ENCODE measurements at regions of chr10 and their contacts with region 1.

Region 1: DNA sequence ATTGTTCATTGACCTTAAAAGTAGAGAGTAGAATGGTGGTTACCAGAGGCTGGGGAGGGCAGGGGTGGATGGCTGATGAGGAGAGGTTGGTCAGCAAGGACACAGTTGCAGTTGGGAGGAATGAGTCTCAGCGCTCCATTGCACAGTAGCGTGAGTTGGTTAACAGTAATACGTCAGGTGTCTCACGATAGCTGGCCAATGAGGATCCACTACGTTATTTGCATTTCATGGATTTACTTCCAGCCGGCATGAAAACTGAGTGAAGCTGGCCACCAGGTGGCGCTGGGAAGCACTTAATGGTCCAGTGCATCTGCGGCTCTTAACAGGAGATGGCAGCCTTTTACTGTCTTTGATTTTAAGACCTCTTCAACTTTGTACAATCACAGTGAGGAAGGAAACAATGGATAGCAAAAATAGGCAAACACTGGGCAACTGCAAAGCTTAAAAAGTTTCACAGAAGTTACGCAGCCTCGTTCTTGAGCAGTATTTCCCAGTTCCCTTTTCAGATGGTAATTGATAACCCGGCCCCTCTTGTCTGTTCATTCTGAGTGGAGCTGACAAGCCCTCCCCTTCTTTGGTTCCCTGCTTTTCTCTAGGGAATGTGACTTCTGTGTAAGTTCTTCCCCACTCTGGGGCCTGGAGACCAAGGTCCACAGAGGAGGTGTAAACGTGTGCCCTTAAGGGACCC is 23.7 kb downstream of the AKR1E2 start:
- ATAC-seq: peak; percentile 76 to 95 (median 90)
- H3K4me3 ChIP-seq: no peak overlapping the region
- H3K27ac ChIP-seq: no peak overlapping the region
- H3K4me1 ChIP-seq: peaks cover 3 to 4% of the 10 kb centered on the region in 2 donors

Region 2: GRCh38 chr10:5018134-5018533 is 168.4 kb after region 1 on chr10:
- in situ Hi-C with region 1: no loop called
- ATAC-seq: peak in 5 of 8 experiments; percentile 10 to 76 (median 70)
- H3K4me3 ChIP-seq: no peak overlapping the region
- H3K27ac ChIP-seq: no peak overlapping the region
- H3K4me1 ChIP-seq: peaks cover 4 to 19% of the 10 kb centered on the region in 2 donors

Region 3: DNA sequence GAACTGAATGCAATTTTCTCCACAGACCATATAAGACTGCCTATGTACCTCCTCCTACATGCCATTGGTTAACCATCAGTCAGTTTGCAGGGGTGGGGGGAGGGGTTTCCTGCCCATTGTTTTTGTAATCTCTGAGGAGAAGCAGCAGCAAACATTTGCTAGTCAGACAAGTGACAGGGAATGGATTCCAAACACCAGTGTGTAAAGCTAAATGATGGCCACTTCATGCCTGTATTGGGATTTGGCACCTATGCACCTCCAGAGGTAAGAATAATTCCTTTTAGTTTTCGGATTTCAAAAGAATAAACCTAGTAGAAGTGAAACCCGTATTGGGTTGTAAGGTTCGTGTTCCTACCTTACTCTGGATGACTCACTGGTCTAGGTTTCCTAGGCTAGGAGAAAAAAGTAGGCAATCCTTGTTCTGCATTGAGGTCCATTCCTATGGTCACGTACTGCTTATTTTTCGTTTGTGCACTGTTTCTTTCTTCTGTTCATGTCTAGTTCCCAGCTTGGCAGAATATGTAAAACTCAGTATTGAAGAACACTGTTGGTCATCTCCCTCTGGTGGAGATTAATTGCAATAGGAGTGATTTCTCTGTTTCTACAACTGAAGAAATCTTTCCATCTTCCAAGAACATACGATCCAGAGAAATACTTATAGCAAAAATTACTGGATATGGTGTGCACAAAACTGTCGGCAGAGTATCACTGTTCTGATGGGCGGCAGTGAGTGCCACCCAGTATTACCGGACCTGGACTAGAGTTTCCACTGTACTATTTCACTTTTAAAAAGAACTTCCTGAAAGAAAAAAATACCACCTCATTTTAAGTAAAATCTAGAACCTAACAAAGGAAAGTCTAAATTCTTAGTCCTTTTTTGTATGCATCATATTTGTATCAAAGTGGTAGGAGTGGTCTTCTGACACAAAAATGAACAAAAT is 244.8 kb after region 1 on chr10 and contains the start of gene AKR1C3:
- in situ Hi-C with region 1: loop called in 1 of 9 experiments (anchors 10 kb)
- ATAC-seq: peak in 5 of 8 experiments; percentile 24 to 91 (median 88)
- H3K4me3 ChIP-seq: no peak within 1 kb of the TSS
- H3K27ac ChIP-seq: no peak within 1 kb of the TSS
- H3K4me1 ChIP-seq: no peaks in the 10 kb centered on the region
- total RNA-seq, gene AKR1C3: 0.54 to 76.4 (median 1.6) TPM in 7 of 8 experiments, not detected in the other

Region 4: GRCh38 chr10:5317547-5318107 is 467.9 kb after region 1 on chr10:
- in situ Hi-C with region 1: loop called in 1 of 9 experiments (anchors 25 kb)
- ATAC-seq: peak; percentile 52 to 100 (median 76)
- H3K4me3 ChIP-seq: no peak overlapping the region
- H3K27ac ChIP-seq: no peak overlapping the region
- H3K4me1 ChIP-seq: peaks cover 0 to 5% of the 10 kb centered on the region in 2 donors

Region 5: DNA sequence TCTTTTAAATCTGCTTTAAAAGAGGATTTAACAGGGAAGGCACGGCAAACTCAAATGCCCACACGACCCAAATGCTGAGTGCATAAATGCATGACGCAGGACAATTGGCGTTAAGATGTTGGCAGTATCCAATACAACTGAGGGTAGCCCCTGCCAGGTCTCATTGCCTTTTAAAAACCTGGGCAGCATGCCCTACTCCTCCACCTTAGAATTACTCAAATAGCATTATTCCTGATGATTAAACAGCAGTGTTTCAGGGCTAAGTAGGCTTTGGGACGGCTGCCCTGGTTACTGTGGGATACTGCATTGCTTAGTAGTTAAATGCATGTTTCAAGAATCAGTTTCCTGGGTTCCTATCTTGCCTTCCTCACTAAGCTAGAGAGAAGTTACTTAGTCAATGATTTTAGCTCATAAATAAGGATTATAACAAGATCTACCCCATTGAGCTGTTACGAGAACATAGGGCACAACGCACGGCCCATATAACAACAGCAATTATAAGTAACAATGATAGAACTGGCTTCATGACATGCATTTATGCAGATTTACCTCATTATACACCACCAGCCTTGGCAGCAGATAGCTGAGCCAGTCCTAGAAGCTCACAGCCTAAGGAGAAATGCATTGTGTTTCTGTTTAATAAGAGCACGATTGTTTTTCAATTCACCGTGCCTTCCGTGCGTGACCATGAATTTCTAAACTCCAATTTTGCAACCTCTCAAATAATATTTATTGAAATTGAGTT is 547.0 kb after region 1 on chr10:
- in situ Hi-C with region 1: loop called in 2 of 9 experiments (anchors 25 kb)
- ATAC-seq: peak in 2 of 8 experiments; percentile 35 to 63
- H3K4me3 ChIP-seq: no peak overlapping the region
- H3K27ac ChIP-seq: no peak overlapping the region
- H3K4me1 ChIP-seq: no peaks in the 10 kb centered on the region

Region 6: DNA sequence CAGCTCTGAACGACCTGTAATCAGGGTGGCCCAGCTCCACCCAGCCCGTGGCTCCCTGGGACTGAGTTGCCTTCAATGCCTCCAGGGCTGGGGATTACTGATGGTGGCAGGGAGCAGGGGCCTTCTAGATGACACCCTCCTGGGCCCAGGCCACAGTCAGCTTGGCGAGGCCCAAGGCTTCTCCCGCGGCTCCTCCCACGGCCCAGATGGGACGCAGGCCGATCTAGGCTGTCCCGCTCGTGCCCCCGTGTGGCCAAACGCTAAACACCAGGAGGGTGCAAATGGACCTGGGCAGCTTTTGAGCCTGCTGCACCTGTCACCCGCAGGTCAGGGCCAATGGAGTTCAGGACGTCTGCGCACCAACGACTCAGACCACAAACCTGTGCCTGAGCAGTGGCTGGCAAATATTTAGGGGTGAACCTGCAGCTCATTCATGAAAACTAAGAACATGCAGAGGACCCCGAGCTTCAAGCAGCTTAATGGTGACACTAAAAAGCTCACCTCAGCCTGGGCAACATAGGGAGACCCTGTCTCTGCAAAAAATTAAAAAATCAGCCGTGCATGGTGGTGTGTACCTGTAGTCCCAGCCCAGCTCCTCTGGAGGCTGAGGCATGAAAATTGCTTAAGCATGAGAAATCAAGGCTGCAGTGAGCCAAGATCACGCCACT is 773.5 kb after region 1 on chr10:
- in situ Hi-C with region 1: loop called in 3 of 9 experiments (anchors 25 kb)
- ATAC-seq: peak; percentile 81 to 97 (median 92)
- H3K4me3 ChIP-seq: no peak overlapping the region
- H3K27ac ChIP-seq: no peak overlapping the region
- H3K4me1 ChIP-seq: peaks cover 14 to 20% of the 10 kb centered on the region in 2 donors

Measured in motor neuron (in vitro differentiated cells).